ENCODE measurements at regions of chr22 and their contacts with region 1.

Region 1: GRCh38 chr22:21735200-21736076 is at the start of gene YPEL1:
- DNase-seq: peak; percentile 94
- H3K4me3 ChIP-seq: peak within 1 kb of the TSS; percentile 47 to 53 (median 50)
- H3K27ac ChIP-seq: no peak within 1 kb of the TSS
- H3K4me1 ChIP-seq: peaks cover 10% of the 10 kb centered on the region
- H3K27me3 ChIP-seq: no peaks in the 10 kb centered on the region
- CTCF ChIP-seq: no peak
- total RNA-seq, gene YPEL1: under 0.01 to 0.07 TPM

Region 2: GRCh38 chr22:21652010-21652546 is 83.4 kb before region 1 on chr22:
- CTCF ChIA-PET with region 1: no interaction called
- dilution Hi-C with region 1: no loop called
- in situ Hi-C with region 1: no loop called
- intact Hi-C with region 1: no loop called
- DNase-seq: peak; percentile 85
- H3K4me3 ChIP-seq: peak overlapping the region; percentile 77 to 97 (median 89)
- H3K27ac ChIP-seq: peak overlapping the region; percentile 32
- H3K4me1 ChIP-seq: peaks cover 14% of the 10 kb centered on the region
- H3K27me3 ChIP-seq: no peaks in the 10 kb centered on the region
- CTCF ChIP-seq: no peak

Region 3: DNA sequence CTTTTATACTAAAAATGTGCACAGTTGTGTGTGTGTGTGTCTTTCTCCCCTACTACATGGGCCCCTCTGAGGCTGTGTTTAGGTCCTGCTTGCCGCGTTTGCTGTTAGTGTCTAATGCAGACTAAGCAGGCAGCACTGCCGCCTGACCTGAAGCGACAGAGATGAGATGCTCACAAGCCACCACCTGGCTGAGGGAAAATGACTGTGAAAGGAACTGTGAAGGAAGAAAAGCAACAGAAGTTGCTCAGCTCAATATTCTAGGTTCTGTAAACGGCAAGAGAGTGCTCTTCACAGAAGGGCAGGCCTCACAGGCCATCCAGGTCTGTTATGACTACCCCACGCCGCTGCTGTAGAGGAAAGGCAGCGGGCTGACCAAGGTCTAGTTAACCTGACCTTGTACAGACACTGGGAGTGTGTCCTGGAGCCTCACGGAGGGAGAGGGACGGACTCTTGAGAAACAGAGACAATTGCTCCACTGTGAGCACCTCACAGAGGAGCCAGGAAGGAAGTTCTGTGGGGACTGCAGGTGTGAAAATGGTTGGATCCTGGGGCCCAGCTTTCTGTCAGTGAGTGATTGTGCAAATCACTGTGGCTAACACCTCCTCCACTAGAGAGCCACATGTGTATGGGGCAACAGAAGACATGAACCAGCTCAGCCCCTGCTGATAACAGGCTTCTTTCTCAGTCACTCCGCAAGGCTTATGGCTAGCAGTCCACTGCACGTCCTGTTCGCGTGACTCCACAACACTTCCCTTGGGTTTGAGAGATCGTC is 31.4 kb after region 1 on chr22:
- CTCF ChIA-PET with region 1: no interaction called
- dilution Hi-C with region 1: no loop called
- in situ Hi-C with region 1: no loop called
- intact Hi-C with region 1: no loop called
- DNase-seq: no peak
- H3K4me3 ChIP-seq: no peak overlapping the region
- H3K27ac ChIP-seq: no peak overlapping the region
- H3K4me1 ChIP-seq: no peaks in the 10 kb centered on the region
- H3K27me3 ChIP-seq: no peaks in the 10 kb centered on the region
- CTCF ChIP-seq: no peak

Region 4: DNA sequence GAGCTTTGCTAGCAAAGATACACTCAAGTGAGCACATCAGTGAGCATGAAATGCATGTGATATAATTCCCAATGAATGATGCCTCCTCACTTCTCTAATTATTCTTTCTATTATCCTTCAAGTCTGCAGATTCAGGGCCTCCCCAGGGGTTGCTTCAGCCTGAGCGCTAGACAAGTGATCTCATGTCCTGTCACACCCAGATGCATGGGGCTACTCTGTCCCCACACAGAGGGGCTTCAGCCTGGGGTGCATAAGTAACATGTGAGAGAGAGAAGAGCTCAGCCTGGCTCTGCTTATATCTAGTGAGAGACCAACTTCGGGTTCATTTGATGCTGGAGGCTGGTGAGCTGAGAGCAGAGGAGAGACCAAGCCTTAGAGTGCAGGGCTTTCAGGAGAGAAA is 594.4 kb after region 1 on chr22:
- CTCF ChIA-PET with region 1: no interaction called
- dilution Hi-C with region 1: no loop called
- in situ Hi-C with region 1: no loop called
- intact Hi-C with region 1: loop called (anchors 10 kb)
- DNase-seq: no peak
- H3K4me3 ChIP-seq: no peak overlapping the region
- H3K27ac ChIP-seq: no peak overlapping the region
- H3K4me1 ChIP-seq: no peaks in the 10 kb centered on the region
- H3K27me3 ChIP-seq: no peaks in the 10 kb centered on the region
- CTCF ChIP-seq: no peak